H1 (cell line): ENCODE measurements at regions of chr18 and their contacts with region 1.

Region 1: DNA sequence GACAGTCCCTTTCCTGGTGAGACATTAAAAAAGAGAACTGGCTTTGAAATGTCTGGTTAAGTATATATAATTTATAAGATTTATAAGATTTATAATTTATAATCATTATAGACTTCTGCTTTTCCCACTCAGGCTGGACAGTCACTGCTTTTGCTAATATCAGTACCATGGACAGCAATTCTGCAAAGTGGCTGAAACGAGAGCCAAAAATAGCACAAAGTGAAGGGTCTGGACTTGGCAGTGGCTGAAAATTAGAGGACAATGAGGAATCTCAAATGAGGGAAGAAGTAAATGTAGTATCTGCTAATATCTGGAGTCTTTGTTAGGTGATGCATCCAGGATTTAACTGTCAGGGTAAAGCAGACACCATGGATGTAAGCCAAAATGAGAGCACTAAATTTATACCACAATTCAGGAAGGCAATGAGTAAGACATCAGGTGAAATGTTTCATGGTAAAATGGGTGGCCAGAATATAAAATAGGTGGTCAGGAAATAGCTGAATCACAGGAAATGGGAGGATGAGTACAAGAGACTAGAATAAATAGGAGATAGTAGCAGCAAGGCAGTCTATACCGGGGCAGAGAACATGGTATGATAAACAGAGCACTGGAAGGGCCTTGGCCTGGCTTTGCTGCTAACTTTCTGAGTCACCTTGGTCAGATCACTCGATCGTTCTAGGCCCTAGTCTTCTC is 39.6 kb upstream of the BOD1L2 start:
- DNase-seq: no peak
- H3K4me3 ChIP-seq: no peak overlapping the region
- H3K27ac ChIP-seq: no peak overlapping the region
- H3K4me1 ChIP-seq: no peaks in the 10 kb centered on the region
- H3K27me3 ChIP-seq: no peaks in the 10 kb centered on the region
- CTCF ChIP-seq: no peak
- EP300 ChIP-seq: no peak
- POLR2A ChIP-seq: no peak
- RAD21 ChIP-seq: no peak

Region 2: GRCh38 chr18:57121542-57122112 is 14.3 kb after region 1 on chr18:
- CTCF ChIA-PET with region 1: interaction called, 11 read pairs
- POLR2A ChIA-PET with region 1: interaction called, 3 read pairs
- DNase-seq: peak in 1 of 2 experiments; percentile 79
- H3K4me3 ChIP-seq: peak overlapping the region; percentile 34 to 58 (median 45)
- H3K27ac ChIP-seq: no peak overlapping the region
- H3K4me1 ChIP-seq: peaks cover 4 to 14% (median 5%) of the 10 kb centered on the region in 4 experiments; a peak in 4 of 7 replicates
- H3K27me3 ChIP-seq: no peaks in the 10 kb centered on the region; a peak in 2 of 7 replicates
- CTCF ChIP-seq: peak; percentile 20 to 27 (median 27)
- EP300 ChIP-seq: no peak
- POLR2A ChIP-seq: peak in 1 of 2 experiments; percentile 39; a peak in 1 of 3 replicates
- RAD21 ChIP-seq: peak in 1 of 2 experiments; percentile 57; a peak in 3 of 4 replicates

Region 3: GRCh38 chr18:57150828-57151227 is 43.5 kb after region 1 on chr18:
- CTCF ChIA-PET with region 1: no interaction called
- POLR2A ChIA-PET with region 1: no interaction called
- DNase-seq: peak; percentile 7 to 70
- H3K4me3 ChIP-seq: no peak overlapping the region
- H3K27ac ChIP-seq: no peak overlapping the region
- H3K4me1 ChIP-seq: peaks cover 2 to 7% (median 4%) of the 10 kb centered on the region in 4 experiments; a peak in 4 of 7 replicates
- H3K27me3 ChIP-seq: no peaks in the 10 kb centered on the region
- CTCF ChIP-seq: no peak
- EP300 ChIP-seq: no peak
- POLR2A ChIP-seq: no peak
- RAD21 ChIP-seq: no peak